Endothelial cell of umbilical vein (primary cell): ENCODE measurements at regions of chr7 and their contacts with region 1.

Region 1: DNA sequence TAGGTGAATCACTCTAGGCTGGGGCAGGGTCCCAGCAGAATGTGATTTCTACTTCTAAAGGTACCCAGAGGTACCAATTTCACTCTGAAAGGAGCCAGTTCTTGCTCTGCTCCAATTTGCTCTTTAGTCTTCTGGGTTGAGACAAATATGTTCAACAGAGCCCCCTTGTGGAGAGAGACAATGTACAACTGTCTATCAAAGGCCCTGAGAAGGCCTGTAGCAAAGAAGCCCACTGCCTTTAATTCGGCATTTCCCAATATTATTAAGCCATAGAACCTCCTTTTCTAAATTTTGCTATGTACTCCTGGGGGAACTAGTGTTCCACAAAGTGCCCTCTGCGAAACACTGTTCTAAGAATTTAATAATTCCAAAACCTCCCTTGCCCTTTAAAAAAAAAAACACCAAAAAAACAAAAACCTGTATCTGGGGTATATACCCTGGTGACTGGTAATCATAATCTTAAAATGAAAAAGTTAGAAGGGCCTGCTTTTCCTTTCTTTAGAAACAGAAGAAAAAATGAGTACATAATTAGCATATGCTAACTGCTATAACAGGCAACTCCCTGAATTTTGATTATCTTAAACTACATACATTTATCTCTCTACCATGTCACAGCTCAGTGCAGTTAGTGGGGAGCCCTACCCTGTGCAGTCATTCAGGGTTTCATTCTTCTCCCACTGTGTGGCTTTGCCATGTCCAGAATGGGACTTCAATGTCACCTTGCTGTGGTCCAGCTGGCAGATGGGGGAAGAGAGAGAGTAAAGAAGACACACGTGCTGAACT is 160.9 kb upstream of the BMPER start:
- DNase-seq: peak; percentile 34
- H3K4me3 ChIP-seq: no peak overlapping the region
- H3K27ac ChIP-seq: no peak overlapping the region
- H3K4me1 ChIP-seq: peaks cover 11% of the 10 kb centered on the region
- H3K27me3 ChIP-seq: no peaks in the 10 kb centered on the region
- CTCF ChIP-seq: peak; percentile 32 to 40
- POLR2A ChIP-seq: no peak

Region 2: GRCh38 chr7:33423646-33424020 is 320.9 kb before region 1 on chr7:
- CTCF ChIA-PET with region 1: no interaction called
- POLR2A ChIA-PET with region 1: no interaction called
- dilution Hi-C with region 1: no loop called
- intact Hi-C with region 1: loop called (anchors 1 kb)
- DNase-seq: peak; percentile 15
- H3K4me3 ChIP-seq: no peak overlapping the region
- H3K27ac ChIP-seq: no peak overlapping the region
- H3K4me1 ChIP-seq: no peaks in the 10 kb centered on the region
- H3K27me3 ChIP-seq: no peaks in the 10 kb centered on the region
- CTCF ChIP-seq: peak; percentile 16 to 27
- POLR2A ChIP-seq: no peak

Region 3: GRCh38 chr7:33459340-33459751 is 285.1 kb before region 1 on chr7:
- CTCF ChIA-PET with region 1: interaction called, 3 read pairs
- POLR2A ChIA-PET with region 1: no interaction called
- dilution Hi-C with region 1: no loop called
- intact Hi-C with region 1: loop called (anchors 1 kb)
- DNase-seq: peak; percentile 74
- H3K4me3 ChIP-seq: no peak overlapping the region
- H3K27ac ChIP-seq: no peak overlapping the region
- H3K4me1 ChIP-seq: no peaks in the 10 kb centered on the region
- H3K27me3 ChIP-seq: no peaks in the 10 kb centered on the region
- CTCF ChIP-seq: peak; percentile 38 to 59
- POLR2A ChIP-seq: no peak

Region 4: GRCh38 chr7:33669251-33669670 is 75.2 kb before region 1 on chr7:
- CTCF ChIA-PET with region 1: no interaction called
- POLR2A ChIA-PET with region 1: no interaction called
- dilution Hi-C with region 1: no loop called
- intact Hi-C with region 1: loop called (anchors 1 kb)
- DNase-seq: peak; percentile 93
- H3K4me3 ChIP-seq: peak overlapping the region in 1 of 3 experiments; percentile 31
- H3K27ac ChIP-seq: peak overlapping the region; percentile 85
- H3K4me1 ChIP-seq: peaks cover 30% of the 10 kb centered on the region
- H3K27me3 ChIP-seq: no peaks in the 10 kb centered on the region
- CTCF ChIP-seq: no peak
- POLR2A ChIP-seq: peak; percentile 41

Region 5: DNA sequence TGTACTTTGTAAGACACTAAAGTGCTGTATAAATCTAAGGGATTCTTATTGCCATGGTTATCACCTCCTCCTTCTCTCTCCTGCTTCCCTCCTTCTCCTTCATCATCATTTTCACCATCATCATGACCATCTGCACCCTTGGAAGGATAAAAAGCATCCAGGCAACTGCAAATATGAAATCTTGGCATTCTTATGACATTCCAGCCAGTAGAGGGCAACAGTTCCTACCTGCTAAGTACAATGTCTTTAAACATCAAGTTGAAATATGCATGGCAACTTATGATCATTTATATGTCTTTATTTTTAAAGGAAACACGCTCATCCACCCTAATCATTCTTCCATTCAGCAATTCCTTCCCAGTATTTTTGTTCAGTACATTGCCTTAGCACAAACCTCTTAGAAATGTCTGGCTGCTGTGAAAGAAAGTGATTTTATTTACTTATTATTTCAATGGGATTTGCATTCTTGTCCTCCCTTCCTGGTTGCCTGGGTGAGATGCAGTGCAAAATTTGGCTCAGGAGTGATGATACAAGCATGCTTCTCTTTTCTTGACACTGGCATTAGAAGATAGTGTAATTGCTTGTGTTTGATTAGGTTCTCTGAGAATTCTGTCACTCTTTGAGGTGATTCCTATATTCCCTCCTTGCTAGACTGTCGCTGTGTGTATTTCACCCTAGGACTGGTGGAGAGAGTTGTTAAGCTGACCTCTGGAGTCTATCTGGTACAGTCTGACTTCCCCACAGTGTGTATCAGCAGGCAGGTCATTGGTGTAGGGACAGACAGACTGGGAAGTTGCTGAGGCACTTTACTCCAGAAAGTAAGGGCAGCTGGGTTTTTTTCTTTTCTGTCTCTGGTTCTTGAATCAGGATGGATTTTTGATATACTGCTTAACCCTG is 27.7 kb before region 1 on chr7:
- CTCF ChIA-PET with region 1: interaction called, 8 read pairs
- POLR2A ChIA-PET with region 1: no interaction called
- dilution Hi-C with region 1: no loop called
- intact Hi-C with region 1: loop called (anchors 1 kb)
- DNase-seq: peak; percentile 84
- H3K4me3 ChIP-seq: no peak overlapping the region
- H3K27ac ChIP-seq: no peak overlapping the region
- H3K4me1 ChIP-seq: peaks cover 9% of the 10 kb centered on the region
- H3K27me3 ChIP-seq: no peaks in the 10 kb centered on the region
- CTCF ChIP-seq: peak; percentile 61 to 68
- POLR2A ChIP-seq: no peak